PC-3 (cell line): ENCODE measurements at regions of chr17 and their contacts with region 1.

Region 1: DNA sequence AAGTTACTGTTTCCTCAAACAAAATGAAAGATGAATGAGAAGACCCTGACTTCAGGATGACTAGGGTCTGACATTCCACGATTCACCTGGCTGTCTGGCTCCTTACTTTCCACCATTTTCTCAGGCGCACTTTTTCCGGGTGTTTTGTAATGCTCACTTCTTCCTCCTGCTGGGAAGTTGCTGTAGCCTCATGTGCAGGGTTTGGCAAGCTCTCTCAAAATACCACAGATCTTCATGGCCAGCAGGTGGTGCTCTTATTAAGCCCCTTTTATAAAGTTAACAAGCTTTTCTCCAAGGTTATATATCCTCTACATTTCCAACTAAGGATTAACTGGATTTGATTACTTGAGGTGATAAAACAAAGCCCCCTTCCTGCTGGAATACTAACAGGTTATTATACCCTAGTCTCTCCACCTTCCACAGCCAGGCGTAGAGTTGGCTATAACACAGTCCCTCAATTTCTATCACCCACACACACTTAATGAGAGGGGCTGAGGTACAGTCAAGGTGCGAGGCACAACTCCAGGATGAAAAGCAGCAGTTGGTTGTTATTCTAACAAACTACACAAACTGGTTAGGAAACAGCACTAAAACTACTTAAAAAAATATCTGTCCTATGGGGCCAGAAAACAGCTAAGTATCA is 45.4 kb downstream of the STH start:
- DNase-seq: peak; percentile 92
- ATAC-seq: peak; percentile 75
- H3K4me3 ChIP-seq: no peak overlapping the region
- H3K27ac ChIP-seq: no peak overlapping the region
- H3K4me1 ChIP-seq: peaks cover 11% of the 10 kb centered on the region; the same call in 1 of the 2 replicates
- H3K27me3 ChIP-seq: no peaks in the 10 kb centered on the region
- CTCF ChIP-seq: peak; percentile 99

Region 2: GRCh38 chr17:46002311-46002972 is 42.0 kb before region 1 on chr17:
- CTCF ChIA-PET with region 1: interaction called, 5 read pairs
- POLR2A ChIA-PET with region 1: interaction called, 10 read pairs
- intact Hi-C with region 1: loop called (anchors 1 kb)
- DNase-seq: peak; percentile 88
- ATAC-seq: peak; percentile 79
- H3K4me3 ChIP-seq: no peak overlapping the region
- H3K27ac ChIP-seq: no peak overlapping the region
- H3K4me1 ChIP-seq: peaks cover 12% of the 10 kb centered on the region
- H3K27me3 ChIP-seq: no peaks in the 10 kb centered on the region
- CTCF ChIP-seq: peak; percentile 95

Region 3: DNA sequence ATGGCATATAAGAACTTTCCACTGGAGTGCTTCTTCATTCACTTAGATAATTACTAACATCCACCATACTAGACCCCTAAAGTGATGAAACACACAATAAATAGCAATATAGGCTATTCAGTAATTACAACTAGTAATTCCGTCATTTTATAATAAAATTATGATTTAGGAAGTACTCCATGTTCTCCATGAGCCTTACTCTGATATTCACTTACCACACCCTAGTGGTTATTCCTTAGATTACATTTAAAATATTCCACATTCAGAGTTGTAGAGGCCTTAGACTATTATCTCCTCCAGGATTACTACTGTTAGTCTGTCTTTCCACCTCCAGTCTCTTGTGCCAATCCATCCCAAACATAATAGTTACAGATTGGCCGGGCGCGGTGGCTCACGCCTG is 17.0 kb after region 1 on chr17:
- CTCF ChIA-PET with region 1: interaction called, 13 read pairs
- POLR2A ChIA-PET with region 1: interaction called, 3 read pairs
- intact Hi-C with region 1: loop called (anchors 1 kb)
- DNase-seq: peak; percentile 69
- ATAC-seq: no peak
- H3K4me3 ChIP-seq: no peak overlapping the region
- H3K27ac ChIP-seq: no peak overlapping the region
- H3K4me1 ChIP-seq: peaks cover 37% of the 10 kb centered on the region
- H3K27me3 ChIP-seq: no peaks in the 10 kb centered on the region
- CTCF ChIP-seq: peak; percentile 68

Region 4: DNA sequence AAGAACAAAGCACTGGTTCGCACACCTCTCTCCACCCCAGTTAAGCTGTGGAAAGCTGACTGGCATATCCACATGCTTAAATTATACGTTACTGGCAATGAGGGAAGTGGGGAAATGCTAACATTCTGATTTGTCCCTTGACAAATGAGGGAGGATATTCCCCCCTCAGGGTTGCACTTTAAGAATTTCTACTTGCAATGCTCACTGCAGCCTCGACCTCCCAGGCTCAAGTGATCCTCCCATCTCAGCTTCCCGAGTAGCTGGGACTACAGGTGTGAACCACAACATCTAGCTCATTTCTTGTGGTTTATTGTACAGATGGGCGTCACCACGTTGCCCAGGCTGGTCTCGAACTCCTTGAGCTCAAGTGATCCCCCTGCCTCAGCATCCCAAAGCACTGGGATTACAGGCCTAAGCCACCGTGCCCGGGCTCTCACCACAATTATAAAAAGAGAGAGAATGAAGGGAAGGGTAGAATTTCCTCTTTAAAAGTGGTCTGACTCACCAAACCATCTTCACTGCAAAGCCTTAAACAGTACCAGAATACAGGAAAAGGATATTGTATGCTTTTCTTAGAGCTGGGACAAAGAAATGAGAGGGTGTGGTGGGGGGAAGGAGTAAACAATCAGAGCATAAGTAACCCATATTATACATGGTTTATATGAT is 109.9 kb after region 1 on chr17:
- CTCF ChIA-PET with region 1: no interaction called
- POLR2A ChIA-PET with region 1: no interaction called
- intact Hi-C with region 1: loop called (anchors 10 kb)
- DNase-seq: peak; percentile 63
- ATAC-seq: peak; percentile 92
- H3K4me3 ChIP-seq: no peak overlapping the region
- H3K27ac ChIP-seq: peak overlapping the region; percentile 12; the same call in 1 of the 2 replicates
- H3K4me1 ChIP-seq: peaks cover 22% of the 10 kb centered on the region
- H3K27me3 ChIP-seq: no peaks in the 10 kb centered on the region
- CTCF ChIP-seq: no peak

Region 5: DNA sequence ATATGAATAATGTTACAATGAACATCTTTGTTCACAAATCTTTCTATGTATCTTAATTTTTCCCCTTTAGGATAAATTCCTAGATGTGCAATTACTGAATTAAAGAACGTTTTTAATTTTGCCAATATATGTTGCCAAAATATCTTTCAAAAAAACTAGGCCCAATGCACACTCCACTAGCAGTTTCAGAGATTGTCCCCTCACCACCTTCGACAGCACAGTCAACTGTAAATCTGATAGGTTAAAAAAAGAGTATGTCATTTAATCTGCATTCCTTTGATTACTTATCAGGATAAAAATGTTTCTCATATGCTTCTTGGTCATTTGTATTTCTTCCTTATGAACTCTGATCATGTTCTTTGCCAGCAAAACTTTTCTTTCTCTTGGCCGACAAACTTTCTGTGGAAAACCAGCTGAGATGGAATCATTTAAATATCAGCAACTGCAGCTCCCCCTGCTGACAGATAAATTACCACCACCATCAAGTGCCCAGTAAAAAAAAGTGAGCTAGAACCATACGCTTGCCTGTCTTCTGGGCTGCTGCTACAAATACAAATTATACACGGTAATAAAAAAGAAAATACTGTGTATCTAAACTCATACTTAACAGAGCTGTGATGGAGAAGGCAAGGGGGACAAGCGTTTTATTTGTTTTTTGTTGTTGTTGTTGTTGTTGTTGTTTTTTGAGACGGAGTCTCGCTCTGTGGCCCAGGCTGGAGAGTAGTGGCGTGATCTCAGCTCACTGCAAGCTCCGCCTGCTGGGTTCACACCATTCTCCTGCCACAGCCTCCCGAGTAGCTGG is 168.4 kb after region 1 on chr17:
- CTCF ChIA-PET with region 1: interaction called, 14 read pairs
- POLR2A ChIA-PET with region 1: no interaction called
- intact Hi-C with region 1: loop called (anchors 1 kb)
- DNase-seq: peak; percentile 77
- ATAC-seq: peak; percentile 74
- H3K4me3 ChIP-seq: no peak overlapping the region
- H3K27ac ChIP-seq: no peak overlapping the region
- H3K4me1 ChIP-seq: no peaks in the 10 kb centered on the region
- H3K27me3 ChIP-seq: no peaks in the 10 kb centered on the region
- CTCF ChIP-seq: peak; percentile 87